Lower lobe of right lung (tissue), 2 donors: ENCODE measurements at regions of chr1 and their contacts with region 1.

Region 1: DNA sequence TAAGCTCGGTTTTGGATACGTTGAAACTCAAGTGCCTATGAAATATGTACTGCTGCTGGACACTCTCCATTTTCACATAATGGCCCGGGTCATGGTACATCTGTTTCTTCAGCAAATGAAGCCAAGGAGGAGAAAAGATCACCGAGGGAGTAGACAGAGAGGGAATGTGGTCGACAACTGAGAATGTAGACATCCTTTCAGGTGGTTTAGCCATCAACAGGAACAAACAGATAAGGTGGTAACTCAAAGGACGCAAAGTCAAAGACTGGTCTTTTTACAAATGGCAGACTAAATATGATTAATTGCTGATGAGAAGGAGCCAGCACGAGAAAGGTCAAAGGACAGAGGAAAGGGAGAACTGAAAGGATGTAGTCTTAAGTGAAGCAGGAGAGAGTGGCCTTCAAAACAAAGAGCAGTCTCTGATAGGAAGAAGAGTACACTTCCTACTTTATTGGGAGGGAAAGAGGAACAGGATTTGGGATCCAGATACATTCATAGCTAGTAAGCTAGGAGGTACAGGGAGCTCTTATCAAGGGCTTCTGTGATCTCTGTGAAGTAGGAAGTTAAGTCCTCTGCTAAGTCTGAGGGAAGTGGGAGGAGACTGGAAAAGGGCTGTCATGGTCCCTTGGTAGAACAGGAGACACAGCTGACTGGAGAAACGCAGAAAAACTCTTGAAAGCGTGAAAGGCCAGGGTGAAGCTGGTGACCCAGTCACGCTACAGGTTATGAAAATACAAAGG is 28.3 kb downstream of the NUP133 start:
- DNase-seq: no peak
- ATAC-seq: no peak
- H3K4me3 ChIP-seq: no peak overlapping the region
- H3K27ac ChIP-seq: no peak overlapping the region
- H3K4me1 ChIP-seq: no peaks in the 10 kb centered on the region
- H3K27me3 ChIP-seq: no peaks in the 10 kb centered on the region
- CTCF ChIP-seq: no peak

Region 2: GRCh38 chr1:229268505-229268904 is 211.3 kb before region 1 on chr1:
- intact Hi-C with region 1: loop called (anchors 10 kb)
- DNase-seq: no peak
- ATAC-seq: no peak
- H3K4me3 ChIP-seq: no peak overlapping the region
- H3K27ac ChIP-seq: no peak overlapping the region
- H3K4me1 ChIP-seq: peaks cover 16% of the 10 kb centered on the region
- H3K27me3 ChIP-seq: no peaks in the 10 kb centered on the region
- CTCF ChIP-seq: no peak

Region 3: GRCh38 chr1:229388876-229389580 is 90.8 kb before region 1 on chr1:
- intact Hi-C with region 1: no loop called
- DNase-seq: no peak
- ATAC-seq: no peak
- H3K4me3 ChIP-seq: no peak overlapping the region
- H3K27ac ChIP-seq: no peak overlapping the region
- H3K4me1 ChIP-seq: no peaks in the 10 kb centered on the region
- H3K27me3 ChIP-seq: peaks cover 10% of the 10 kb centered on the region
- CTCF ChIP-seq: no peak